HEK293 (cell line): ENCODE measurements at regions of chr1 and their contacts with region 1.

Region 1: GRCh38 chr1:205523891-205524793 is 19.7 kb downstream of the CDK18 start:
- H3K4me3 ChIP-seq: no peak overlapping the region
- H3K27ac ChIP-seq: no peak overlapping the region
- H3K4me1 ChIP-seq: peaks cover 8% of the 10 kb centered on the region
- CTCF ChIP-seq: peak; percentile 91

Region 2: DNA sequence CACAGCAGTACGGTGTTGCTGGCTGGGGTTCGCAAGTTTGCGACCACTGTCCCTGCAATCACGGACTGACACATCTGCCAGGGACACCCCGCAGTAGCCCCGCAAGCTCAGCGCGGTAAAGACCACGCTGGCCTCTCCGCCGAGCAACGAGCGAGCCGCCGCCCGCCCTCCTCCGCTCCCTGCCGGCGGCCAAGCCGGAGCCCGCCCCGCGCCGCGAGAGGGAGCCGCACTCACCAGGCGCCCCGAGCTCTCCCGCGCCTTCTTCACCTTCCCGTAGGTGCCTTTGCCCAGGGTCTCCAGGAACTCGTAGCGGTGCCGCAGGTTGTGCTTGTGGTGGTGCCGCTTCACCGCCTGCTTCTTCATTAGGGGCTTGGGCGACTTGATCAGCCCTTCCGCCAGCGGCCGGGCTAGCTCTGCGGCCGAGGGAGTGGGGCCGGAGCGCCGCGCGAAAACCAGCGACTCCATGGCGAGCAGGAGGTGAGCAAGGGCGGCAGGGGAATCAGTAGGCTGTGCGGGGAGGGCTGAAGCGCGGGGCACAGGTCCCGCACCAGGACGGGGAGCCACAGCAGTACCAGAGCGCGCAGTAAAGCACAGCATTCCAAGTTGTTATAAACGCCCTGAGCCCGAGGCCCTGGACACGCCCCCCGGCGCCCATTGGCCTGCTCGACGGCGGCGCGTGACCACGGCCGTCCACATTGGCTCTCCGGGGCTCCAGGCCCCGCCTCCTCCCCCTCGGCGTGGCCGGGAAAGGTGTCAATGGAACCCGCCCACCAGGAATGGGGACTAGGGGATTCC is 202.8 kb before region 1 on chr1 and contains the start of gene NUAK2:
- CTCF ChIA-PET with region 1: interaction called, 12 read pairs
- POLR2A ChIA-PET with region 1: no interaction called
- H3K4me3 ChIP-seq: peak within 1 kb of the TSS; percentile 74
- H3K27ac ChIP-seq: peak within 1 kb of the TSS; percentile 18; the same call in 1 of the 2 replicates
- H3K4me1 ChIP-seq: peaks cover 10% of the 10 kb centered on the region
- CTCF ChIP-seq: peak; percentile 85

Region 3: DNA sequence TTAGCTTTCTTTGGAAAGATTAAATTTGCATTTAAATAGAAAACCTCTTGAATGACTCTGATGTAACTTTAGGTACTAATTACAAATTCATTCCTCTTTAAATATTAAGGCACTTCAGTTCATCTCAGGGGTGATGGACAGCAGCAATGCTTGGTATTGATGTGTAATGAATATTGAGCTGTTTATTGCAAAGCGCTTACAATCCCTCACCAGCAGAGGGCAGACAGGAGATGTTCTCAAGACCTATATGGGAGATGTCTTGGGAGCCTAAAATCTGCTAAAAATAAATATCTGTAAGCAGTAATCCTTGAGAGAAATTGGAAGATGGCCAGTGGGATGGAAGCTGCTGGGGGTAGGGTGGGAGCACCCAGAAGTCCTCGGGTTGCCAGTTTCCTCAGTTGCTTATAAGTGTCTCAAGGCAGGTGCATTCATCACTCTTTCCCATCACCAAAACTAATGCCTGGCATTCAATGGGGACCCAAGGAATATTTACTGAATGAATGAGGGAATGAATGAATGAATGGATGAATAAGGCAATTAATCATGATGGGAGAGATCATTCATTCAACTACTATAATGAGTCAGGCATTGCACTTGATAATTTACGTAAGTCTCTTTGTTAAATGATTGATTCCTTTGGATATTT is 169.8 kb before region 1 on chr1:
- CTCF ChIA-PET with region 1: interaction called, 40 read pairs
- POLR2A ChIA-PET with region 1: no interaction called
- H3K4me3 ChIP-seq: no peak overlapping the region
- H3K27ac ChIP-seq: no peak overlapping the region
- H3K4me1 ChIP-seq: no peaks in the 10 kb centered on the region; the same call in 1 of the 2 replicates
- CTCF ChIP-seq: no peak; the same call in 1 of the 2 replicates

Region 4: GRCh38 chr1:205430696-205431305 is 93.3 kb before region 1 on chr1:
- CTCF ChIA-PET with region 1: interaction called, 12 read pairs
- POLR2A ChIA-PET with region 1: no interaction called
- H3K4me3 ChIP-seq: peak overlapping the region; percentile 46
- H3K27ac ChIP-seq: no peak overlapping the region
- H3K4me1 ChIP-seq: 0 out of 2 replicates have a peak, but pooled peaks cover 2% of the 10 kb centered on the region
- CTCF ChIP-seq: peak; percentile 93

Region 5: DNA sequence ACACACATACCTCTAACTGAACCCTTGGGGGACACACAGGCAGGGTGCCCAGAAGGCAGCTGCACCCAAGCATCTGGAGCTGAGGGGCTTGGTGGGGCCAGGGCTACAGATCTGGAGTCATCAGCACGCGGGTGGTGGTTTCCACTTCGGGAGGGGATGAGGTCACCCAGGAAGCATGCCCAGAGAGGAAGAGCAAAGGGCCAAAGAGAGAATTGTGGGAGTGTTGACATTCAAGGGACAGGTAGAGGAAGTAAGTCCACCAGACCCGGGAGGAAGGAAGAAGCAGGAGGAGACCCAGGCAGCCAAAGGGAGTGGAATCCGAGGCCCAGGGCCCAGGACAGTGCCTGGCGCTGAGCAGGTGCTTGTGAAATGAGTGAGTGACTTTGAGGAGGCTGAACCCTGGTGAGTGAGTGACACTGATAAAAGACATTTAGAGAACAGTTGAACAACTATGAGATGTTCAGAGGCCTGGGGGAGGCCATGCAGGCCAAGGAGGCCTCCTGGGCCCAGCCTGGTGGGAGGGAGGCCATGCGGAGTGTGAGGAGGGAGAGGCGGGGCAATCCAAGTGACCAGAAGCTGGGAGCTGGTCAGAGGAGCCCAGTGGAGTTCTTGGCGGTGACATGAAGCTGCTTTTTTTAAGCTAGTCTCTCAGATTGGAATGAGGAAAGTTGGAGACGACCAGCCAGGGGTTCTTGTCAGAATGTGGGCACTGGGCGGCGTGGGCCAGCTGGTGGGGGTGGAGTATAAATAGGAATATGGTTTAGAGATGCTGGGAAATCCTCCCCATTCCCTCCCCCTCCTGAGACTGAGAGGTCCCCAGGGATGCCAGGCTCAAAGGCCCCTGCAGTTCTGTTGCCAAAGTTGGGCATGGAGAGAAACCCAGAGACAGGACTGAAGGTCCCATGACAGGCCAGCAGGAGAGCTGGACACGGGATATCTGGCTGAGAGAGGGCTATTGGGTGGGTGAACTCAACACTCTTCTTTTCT is 11.8 kb before region 1 on chr1:
- CTCF ChIA-PET with region 1: interaction called, 43 read pairs
- POLR2A ChIA-PET with region 1: no interaction called
- H3K4me3 ChIP-seq: no peak overlapping the region
- H3K27ac ChIP-seq: no peak overlapping the region
- H3K4me1 ChIP-seq: no peaks in the 10 kb centered on the region
- CTCF ChIP-seq: no peak

Region 6: DNA sequence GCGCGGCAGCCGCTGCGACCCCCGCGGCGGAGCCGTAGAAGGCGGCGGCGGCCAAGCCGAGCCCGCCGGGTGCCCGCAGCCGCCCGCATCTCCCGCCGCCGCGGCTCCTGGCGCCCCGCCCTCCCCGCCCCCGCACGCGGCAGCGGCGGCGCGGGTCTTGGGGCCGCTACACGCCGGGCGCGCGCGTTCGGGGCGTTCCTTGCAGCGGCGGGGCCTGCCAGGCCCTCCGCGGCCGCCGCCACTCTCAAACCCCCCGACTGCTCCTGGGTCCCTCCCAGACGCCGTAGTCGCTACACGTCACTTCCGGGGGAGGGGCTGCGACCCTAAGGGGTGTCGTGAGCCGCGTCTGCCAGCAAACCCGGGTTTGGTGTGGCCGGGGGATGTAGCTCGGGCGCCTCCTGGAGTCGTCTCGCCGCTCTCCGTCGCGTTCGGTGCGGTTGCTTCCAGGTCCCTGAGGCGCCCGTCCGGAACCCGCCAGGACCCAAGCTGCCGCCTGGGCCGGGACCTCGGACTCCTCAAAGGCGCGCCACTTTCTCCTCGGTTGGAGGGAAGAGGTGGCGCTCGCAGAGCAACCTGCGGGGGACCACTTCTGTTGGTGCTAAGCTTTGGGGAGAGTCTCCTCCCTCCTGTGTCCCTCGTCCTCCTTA is 107.7 kb after region 1 on chr1 and contains the start of gene ELK4:
- CTCF ChIA-PET with region 1: interaction called, 13 read pairs
- POLR2A ChIA-PET with region 1: no interaction called
- H3K4me3 ChIP-seq: peak within 1 kb of the TSS; percentile 83
- H3K27ac ChIP-seq: peak within 1 kb of the TSS; percentile 97
- H3K4me1 ChIP-seq: no peaks in the 10 kb centered on the region
- CTCF ChIP-seq: peak; percentile 95